ENCODE measurements at regions of chr1 and their contacts with region 1.

Region 1: DNA sequence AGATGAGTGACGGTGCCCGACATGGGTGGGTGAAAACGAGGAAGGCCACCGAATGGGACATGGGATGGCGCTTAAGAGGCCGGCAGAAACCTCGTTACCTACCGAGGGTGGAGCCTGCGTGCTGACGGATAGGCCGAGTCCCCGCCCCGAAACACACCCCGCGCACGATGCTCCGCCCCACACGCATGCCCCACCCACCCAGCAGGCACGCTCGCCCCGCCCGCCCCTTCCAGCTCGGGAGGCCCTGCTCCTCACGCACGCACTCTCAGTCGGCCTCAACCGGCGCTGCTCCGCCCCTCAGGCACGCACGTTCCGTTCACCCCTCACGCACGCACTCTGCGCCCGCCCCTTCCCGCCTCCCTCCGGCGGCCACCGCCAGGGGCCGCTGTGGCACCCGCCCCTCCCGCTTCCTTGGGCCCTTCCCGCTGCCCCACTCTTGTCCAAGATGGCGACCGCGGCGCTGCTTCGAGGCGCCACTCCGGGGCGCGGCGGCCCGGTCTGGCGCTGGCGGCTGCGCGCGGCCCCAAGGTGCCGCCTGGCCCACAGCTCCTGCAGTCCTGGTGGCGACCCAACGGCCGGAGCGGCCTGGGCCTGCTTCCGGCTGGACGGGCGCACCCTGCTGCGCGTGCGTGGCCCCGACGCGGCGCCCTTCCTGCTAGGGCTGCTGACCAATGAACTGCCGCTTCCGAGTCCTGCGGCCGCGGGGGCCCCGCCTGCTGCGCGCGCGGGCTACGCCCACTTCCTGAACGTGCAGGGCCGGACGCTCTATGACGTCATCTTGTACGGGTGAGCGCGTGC is at the start of gene IBA57:
- DNase-seq: peak; percentile 99 to 100
- ATAC-seq: peak; percentile 86 to 93 (median 90)
- H3K4me3 ChIP-seq: peak within 1 kb of the TSS; percentile 33 to 83 (median 78)
- H3K27ac ChIP-seq: peak within 1 kb of the TSS; percentile 94 to 100 (median 100)
- H3K4me1 ChIP-seq: peaks cover 16 to 59% (median 48%) of the 10 kb centered on the region in 9 donors
- H3K27me3 ChIP-seq: peaks cover 0 to 18% (median 0%) of the 10 kb centered on the region in 7 donors
- CTCF ChIP-seq: peak; percentile 81 to 99 (median 91)
- total RNA-seq, gene IBA57: 9.3 to 20.3 (median 17.2) TPM

Region 2: GRCh38 chr1:227734856-227735538 is 430.6 kb before region 1 on chr1 and contains the starts of genes JMJD4 and SNAP47:
- intact Hi-C with region 1: no loop called
- DNase-seq: peak; percentile 92 to 93
- ATAC-seq: peak; percentile 89 to 95 (median 92)
- H3K4me3 ChIP-seq: peak within 1 kb of the TSS; percentile 74 to 100 (median 92)
- H3K27ac ChIP-seq: peak within 1 kb of the TSS; percentile 70 to 96 (median 92)
- H3K4me1 ChIP-seq: peaks cover 7 to 49% (median 33%) of the 10 kb centered on the region in 9 donors
- H3K27me3 ChIP-seq: no peaks in the 10 kb centered on the region
- CTCF ChIP-seq: no peak
- total RNA-seq, gene JMJD4: 7.6 to 13.4 (median 9.9) TPM
- total RNA-seq, gene SNAP47: 23.2 to 102 (median 65.4) TPM

Region 3: GRCh38 chr1:228185641-228185965 is 20.0 kb after region 1 on chr1:
- intact Hi-C with region 1: no loop called
- DNase-seq: no peak
- ATAC-seq: no peak
- H3K4me3 ChIP-seq: no peak overlapping the region
- H3K27ac ChIP-seq: no peak overlapping the region
- H3K4me1 ChIP-seq: peaks cover 0 to 8% (median 0%) of the 10 kb centered on the region in 9 donors
- H3K27me3 ChIP-seq: no peaks in the 10 kb centered on the region
- CTCF ChIP-seq: no peak

Region 4: GRCh38 chr1:228206582-228207351 is 41.2 kb after region 1 on chr1:
- intact Hi-C with region 1: loop called in 5 of 10 experiments (anchors 5 kb)
- DNase-seq: no peak
- ATAC-seq: peak in 5 of 8 donors; percentile 2 to 22 (median 14)
- H3K4me3 ChIP-seq: no peak overlapping the region
- H3K27ac ChIP-seq: peak overlapping the region; percentile 7 to 100 (median 94)
- H3K4me1 ChIP-seq: peaks cover 3 to 43% (median 27%) of the 10 kb centered on the region in 9 donors
- H3K27me3 ChIP-seq: peaks cover 0 to 7% (median 2%) of the 10 kb centered on the region in 7 donors
- CTCF ChIP-seq: peak in 1 of 9 donors; percentile 4

Region 5: DNA sequence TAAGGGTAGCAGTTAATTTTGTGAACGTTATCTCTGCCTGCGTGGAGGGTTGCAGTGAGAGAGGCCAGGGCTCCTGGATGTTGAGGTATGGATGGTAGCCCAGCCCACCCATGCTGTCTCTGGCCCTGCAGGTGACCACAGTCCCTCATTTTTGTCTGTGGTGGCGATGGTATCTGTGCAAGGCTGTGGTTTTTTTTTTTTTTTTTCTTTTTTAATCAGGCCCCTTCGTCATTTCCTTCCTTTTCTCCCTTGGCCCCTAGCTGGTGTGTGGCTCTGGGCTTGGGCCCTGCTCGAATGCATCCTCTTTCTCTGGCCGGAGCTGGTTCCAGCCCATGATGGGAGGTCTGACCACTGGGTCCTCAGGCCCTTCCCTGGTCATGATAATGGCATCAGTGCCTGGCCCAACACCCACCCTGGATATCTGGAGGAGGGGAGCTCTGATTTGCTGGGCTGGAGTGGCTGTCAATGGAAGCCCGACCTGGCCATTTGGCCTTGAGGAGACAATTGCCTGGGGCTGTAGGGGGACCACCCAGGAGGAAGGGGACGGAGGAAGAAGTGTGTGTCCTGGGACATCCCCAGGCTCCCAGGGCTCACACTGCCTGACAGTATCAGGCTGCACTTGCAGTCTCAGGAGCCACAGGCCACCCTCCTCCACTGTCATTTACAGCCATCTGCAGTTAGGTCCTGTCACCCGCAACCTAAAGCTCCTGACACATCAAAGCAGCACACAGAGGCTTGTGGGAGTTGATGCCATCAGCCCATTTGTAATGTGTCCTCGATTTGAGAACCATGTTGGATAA is 313.5 kb after region 1 on chr1:
- intact Hi-C with region 1: no loop called
- DNase-seq: no peak
- ATAC-seq: peak in 4 of 8 donors; percentile 23 to 47 (median 36)
- H3K4me3 ChIP-seq: no peak overlapping the region
- H3K27ac ChIP-seq: peak overlapping the region in 1 of 10 donors; percentile 45
- H3K4me1 ChIP-seq: peaks cover 0 to 15% (median 0%) of the 10 kb centered on the region in 9 donors
- H3K27me3 ChIP-seq: no peaks in the 10 kb centered on the region
- CTCF ChIP-seq: no peak

Measured in heart right ventricle (tissue), 16 donors.